Esophagus squamous epithelium (tissue), 5 donors: ENCODE measurements at regions of chr3 and their contacts with region 1.

Region 1: GRCh38 chr3:195522254-195523023 is 20.7 kb downstream of the PPP1R2 start:
- DNase-seq: no peak
- H3K4me3 ChIP-seq: no peak overlapping the region
- H3K27ac ChIP-seq: no peak overlapping the region
- H3K4me1 ChIP-seq: peaks cover 0 to 4% (median 0%) of the 10 kb centered on the region in 3 donors
- H3K27me3 ChIP-seq: no peaks in the 10 kb centered on the region
- CTCF ChIP-seq: peak in 5 of 6 experiments; percentile 67 to 92 (median 77)
- POLR2A ChIP-seq: no peak

Region 2: GRCh38 chr3:195271116-195271858 is 251.2 kb before region 1 on chr3 and contains the start of gene XXYLT1:
- intact Hi-C with region 1: loop called (anchors 2 kb)
- DNase-seq: peak; percentile 39
- H3K4me3 ChIP-seq: peak within 1 kb of the TSS; percentile 56 to 90 (median 76)
- H3K27ac ChIP-seq: peak within 1 kb of the TSS; percentile 82 to 95 (median 86)
- H3K4me1 ChIP-seq: peaks cover 19 to 32% (median 25%) of the 10 kb centered on the region in 3 donors
- H3K27me3 ChIP-seq: no peaks in the 10 kb centered on the region
- CTCF ChIP-seq: peak; percentile 93 to 99 (median 97)
- POLR2A ChIP-seq: no peak
- total RNA-seq, gene XXYLT1: 14.1 to 23.7 (median 15.4) TPM

Region 3: GRCh38 chr3:195815169-195815771 is 292.8 kb after region 1 on chr3:
- intact Hi-C with region 1: no loop called
- DNase-seq: no peak
- H3K4me3 ChIP-seq: no peak overlapping the region
- H3K27ac ChIP-seq: peak overlapping the region in 1 of 4 donors; percentile 27
- H3K4me1 ChIP-seq: peaks cover 0 to 10% (median 0%) of the 10 kb centered on the region in 3 donors
- H3K27me3 ChIP-seq: peaks cover 0 to 42% (median 0%) of the 10 kb centered on the region in 4 donors
- CTCF ChIP-seq: no peak
- POLR2A ChIP-seq: no peak